Activated CD8-positive, alpha-beta memory T cell treated with anti-CD3 and anti-CD28 coated beads, Interleukin-2, amount 10 ng/mL, durations not matched to agents 7 days and 5 days (primary cell): ENCODE measurements at regions of chr15 and their contacts with region 1.

Region 1: DNA sequence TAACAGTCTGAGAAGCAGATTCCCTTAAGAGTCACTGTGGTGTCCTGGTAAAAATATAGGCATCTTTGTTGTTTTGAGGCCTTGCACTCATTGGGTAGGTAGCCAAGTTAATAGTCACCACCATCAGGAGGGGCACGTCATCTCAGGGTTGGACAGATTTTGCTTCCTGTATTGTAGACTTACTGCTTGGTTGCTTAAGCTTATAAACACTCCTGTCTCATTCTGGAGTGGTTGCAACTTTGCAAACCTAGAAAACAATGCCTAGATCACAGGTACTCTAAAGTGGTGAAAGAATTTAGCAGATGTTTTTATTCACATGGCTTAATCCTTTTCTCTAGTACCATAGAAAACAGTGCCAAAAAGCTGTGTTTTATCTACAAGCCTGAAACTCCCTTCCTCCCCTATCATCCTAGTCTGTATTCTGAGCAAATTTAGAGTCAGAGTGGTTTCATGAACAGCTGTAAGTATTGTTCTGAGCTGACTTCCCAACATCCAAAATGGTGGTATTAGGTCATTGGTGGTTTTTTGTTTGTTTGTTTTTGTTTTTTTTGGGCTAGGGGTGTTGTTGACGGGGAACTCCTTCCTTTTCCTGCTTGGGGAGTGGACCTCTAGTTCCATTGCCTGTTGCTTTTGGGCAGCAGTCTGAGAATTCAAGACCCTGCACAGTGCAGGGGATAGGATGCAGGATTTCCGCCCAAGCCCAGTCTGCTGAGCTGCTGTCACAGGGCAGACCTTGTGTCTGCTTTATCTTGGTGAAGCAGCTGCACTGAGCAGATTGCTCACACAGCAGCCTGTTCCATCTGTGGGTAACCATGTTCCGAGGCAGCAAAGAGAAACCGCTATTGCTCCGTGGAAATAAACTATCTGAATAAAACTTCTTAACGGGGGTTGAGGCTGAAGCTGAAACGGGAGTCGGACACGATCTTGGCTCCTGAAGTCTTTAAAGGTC is 202.0 kb downstream of the AKAP13 start:
- DNase-seq: peak; percentile 88
- ATAC-seq: peak; percentile 84
- H3K4me3 Mint-ChIP-seq: peak overlapping the region; percentile 82
- H3K27ac Mint-ChIP-seq: peak overlapping the region; percentile 99
- H3K4me1 Mint-ChIP-seq: peaks cover 77% of the 10 kb centered on the region
- H3K27me3 Mint-ChIP-seq: no peaks in the 10 kb centered on the region

Region 2: DNA sequence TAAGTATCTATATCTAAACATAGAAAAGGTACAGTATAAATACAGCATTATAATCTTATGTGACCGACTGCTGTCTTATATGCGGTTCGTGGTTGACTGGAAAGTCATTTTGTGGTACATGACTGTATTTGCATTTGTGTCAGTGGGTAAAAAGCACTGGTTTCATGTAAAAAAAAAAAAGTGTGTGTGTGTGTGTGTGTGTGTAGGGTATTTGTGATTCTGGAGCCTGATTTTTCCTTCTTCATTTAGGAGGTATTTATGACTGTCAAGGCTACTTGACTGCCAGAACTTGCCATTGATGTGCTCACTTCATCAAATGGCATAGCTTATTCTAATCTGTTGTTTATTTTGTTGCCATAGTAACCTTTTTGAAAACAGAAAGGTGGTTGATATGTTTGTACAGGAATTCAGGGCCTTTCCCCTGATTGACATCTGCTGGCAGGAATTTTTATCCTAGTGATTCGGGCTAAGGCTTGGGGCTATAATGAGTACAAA is 138.8 kb before region 1 on chr15:
- CTCF ChIA-PET with region 1: no interaction called
- DNase-seq: peak; percentile 62
- ATAC-seq: peak; percentile 82
- H3K4me3 Mint-ChIP-seq: no peak overlapping the region
- H3K27ac Mint-ChIP-seq: peak overlapping the region; percentile 16
- H3K4me1 Mint-ChIP-seq: peaks cover 34% of the 10 kb centered on the region
- H3K27me3 Mint-ChIP-seq: peaks cover 4% of the 10 kb centered on the region

Region 3: DNA sequence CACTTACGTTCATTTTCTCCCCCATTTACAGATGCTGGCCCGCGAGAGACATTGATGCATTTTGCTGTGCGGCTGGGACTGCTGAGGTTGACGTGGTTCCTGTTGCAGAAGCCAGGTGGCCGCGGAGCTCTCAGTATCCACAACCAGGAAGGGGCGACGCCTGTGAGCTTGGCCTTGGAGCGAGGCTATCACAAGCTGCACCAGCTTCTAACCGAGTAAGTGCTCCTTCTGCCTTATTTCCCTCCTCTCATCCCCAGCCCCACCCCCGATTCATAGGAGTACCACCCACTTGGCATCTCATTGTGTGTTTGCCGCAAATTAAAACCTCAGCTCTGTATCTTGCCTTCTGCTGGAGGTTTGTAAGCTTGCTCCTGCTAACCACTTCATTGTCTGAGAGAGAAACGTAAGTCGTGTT is 38.7 kb before region 1 on chr15:
- CTCF ChIA-PET with region 1: interaction called, 11 read pairs
- DNase-seq: peak; percentile 81
- ATAC-seq: peak; percentile 76
- H3K4me3 Mint-ChIP-seq: peak overlapping the region; percentile 63
- H3K27ac Mint-ChIP-seq: peak overlapping the region; percentile 86
- H3K4me1 Mint-ChIP-seq: peaks cover 80% of the 10 kb centered on the region
- H3K27me3 Mint-ChIP-seq: no peaks in the 10 kb centered on the region

Region 4: DNA sequence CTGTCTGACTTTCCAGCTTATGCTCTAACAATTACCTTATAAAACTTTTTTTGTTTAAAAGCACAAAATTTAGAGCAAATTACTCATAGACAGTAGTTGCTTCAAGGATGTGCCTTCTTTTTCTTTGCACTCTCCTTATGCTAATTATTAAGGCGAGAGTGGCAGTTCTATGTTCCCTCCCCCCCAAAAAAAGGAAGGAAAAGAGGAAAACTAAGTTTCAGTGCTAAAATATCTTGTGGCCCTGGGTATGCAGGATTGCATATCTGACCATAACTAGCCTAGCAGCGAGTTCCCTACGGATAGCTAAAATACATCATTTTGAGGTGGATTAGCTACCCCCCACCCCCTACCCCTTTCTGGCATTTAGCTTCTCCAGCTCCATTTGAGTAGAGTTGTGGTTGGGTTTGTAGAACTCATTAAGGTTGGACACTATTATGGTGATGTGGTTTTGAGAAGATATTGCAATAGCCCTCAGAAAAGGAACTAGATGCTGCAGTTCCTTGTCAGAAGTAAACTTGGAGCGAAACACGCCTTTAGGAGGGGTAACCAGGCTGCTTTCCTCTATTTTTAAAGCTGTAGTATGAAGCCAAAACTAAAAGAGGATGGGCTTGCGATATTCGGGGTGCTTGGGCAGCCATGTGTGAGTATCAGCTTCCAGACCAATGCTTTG is 27.4 kb before region 1 on chr15:
- CTCF ChIA-PET with region 1: interaction called, 23 read pairs
- DNase-seq: no peak
- ATAC-seq: peak; percentile 24
- H3K4me3 Mint-ChIP-seq: no peak overlapping the region
- H3K27ac Mint-ChIP-seq: peak overlapping the region; percentile 17
- H3K4me1 Mint-ChIP-seq: peaks cover 54% of the 10 kb centered on the region
- H3K27me3 Mint-ChIP-seq: no peaks in the 10 kb centered on the region

Region 5: GRCh38 chr15:85689729-85690128 is 107.3 kb after region 1 on chr15:
- CTCF ChIA-PET with region 1: interaction called, 12 read pairs
- DNase-seq: peak; percentile 86
- ATAC-seq: peak; percentile 69
- H3K4me3 Mint-ChIP-seq: peak overlapping the region; percentile 94
- H3K27ac Mint-ChIP-seq: peak overlapping the region; percentile 98
- H3K4me1 Mint-ChIP-seq: peaks cover 76% of the 10 kb centered on the region
- H3K27me3 Mint-ChIP-seq: no peaks in the 10 kb centered on the region

Region 6: GRCh38 chr15:85707519-85708338 is 125.3 kb after region 1 on chr15:
- CTCF ChIA-PET with region 1: no interaction called
- DNase-seq: no peak
- ATAC-seq: peak; percentile 5
- H3K4me3 Mint-ChIP-seq: peak overlapping the region; percentile 75
- H3K27ac Mint-ChIP-seq: peak overlapping the region; percentile 94
- H3K4me1 Mint-ChIP-seq: peaks cover 77% of the 10 kb centered on the region
- H3K27me3 Mint-ChIP-seq: no peaks in the 10 kb centered on the region